AG04449 (cell line): ENCODE measurements at regions of chr2 and their contacts with region 1.

Region 1: DNA sequence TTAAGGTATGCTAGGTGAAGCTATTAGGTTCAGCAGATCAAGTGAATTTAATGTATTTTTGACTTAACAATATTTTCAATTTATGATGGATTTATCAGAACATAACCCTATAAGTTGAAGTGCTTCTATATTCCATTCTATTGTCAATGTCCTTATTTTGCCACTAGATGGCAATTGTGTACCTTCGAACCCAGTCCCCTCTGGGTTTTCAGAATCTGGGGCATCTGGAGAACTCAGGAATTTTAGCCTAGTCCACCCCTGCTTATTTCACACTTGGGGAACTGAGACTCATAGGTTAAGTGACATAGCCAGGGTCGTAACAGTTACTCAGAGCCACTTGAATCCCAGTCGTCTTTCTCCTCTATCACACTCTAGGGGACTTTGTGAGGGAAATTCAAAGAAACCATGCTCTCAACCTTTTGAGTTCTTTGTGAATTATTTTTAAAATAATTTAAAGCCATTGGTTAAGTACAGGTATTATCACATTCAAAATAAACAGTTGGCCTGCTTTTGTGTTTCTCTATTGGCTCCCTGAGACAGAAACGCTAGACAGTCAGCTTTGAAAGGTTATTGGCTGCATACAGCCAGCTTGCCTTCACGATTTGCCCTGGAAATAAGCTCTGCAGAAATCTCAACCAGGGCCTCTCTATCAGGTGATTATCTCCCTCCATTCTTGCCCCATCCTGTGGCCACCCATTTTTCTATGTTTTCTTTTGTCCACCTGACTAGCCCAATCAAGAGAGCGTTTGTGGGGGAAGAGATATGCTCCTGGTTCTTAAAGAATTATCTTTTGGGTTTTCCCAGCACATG is 145.0 kb downstream of the TTC27 start:
- DNase-seq: peak; percentile 21
- H3K4me3 ChIP-seq: no peak overlapping the region
- CTCF ChIP-seq: peak; percentile 44

Region 2: DNA sequence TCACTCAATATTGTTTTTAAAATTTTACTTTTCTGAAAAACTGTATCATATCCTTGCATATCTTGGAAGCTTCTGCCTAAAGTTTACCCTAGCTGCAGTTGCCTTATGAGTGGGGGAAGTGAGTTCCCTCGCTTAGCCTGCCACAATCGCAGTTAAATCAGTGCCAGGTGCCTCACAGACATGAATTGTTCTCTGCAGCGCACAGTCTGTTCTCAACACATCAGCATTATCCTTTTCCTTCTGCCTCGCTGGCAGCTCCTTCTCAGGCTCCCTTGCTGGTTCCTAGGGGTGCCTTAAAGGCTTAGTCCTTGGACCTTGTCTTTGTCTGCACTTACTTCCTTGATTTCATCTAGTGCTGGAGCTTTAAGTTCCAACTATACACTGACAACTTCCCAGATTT is 12.2 kb before region 1 on chr2:
- CTCF ChIA-PET with region 1: interaction called, 29 read pairs
- POLR2A ChIA-PET with region 1: no interaction called
- DNase-seq: no peak
- H3K4me3 ChIP-seq: no peak overlapping the region
- CTCF ChIP-seq: no peak

Region 3: DNA sequence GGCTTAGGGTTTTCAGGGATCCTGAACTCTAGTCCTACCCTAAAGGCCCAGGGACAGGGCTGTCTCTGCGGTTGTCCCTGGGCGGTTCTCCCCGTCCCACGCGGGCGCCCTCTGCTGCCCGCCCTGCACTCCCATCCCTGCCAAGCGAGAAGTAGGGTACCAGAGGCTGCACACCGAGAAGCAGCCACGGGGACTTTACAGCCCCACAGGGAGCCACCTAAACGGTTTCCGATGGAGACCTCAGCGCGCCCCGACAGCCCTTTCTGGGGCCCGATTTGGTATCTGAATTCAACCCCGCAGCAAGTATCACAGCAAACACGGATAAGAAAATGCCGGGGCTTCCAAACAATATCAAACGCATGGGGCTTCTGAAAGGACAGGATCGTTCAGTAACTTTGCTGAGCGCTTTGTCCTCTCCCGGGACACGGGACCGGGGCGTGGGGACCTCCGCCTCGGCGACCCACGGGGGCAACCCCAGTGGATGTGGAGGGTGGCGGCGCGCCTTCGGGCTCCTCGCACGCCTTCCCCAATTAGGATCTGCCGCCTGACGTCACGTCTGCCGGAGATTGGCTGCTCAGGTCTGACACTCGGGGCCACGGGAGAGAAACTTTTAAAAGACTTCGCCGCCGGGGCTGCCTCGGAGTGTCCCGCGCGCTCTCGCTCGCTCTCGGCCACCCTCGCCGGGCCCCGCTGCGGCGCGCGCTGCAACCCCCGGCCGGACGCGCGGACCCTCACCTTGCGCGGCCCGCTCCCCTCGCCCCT is 173.7 kb after region 1 on chr2 and contains the start of gene LTBP1:
- CTCF ChIA-PET with region 1: interaction called, 33 read pairs
- POLR2A ChIA-PET with region 1: no interaction called
- DNase-seq: no peak
- H3K4me3 ChIP-seq: peak within 1 kb of the TSS; percentile 74
- CTCF ChIP-seq: peak; percentile 96

Region 4: DNA sequence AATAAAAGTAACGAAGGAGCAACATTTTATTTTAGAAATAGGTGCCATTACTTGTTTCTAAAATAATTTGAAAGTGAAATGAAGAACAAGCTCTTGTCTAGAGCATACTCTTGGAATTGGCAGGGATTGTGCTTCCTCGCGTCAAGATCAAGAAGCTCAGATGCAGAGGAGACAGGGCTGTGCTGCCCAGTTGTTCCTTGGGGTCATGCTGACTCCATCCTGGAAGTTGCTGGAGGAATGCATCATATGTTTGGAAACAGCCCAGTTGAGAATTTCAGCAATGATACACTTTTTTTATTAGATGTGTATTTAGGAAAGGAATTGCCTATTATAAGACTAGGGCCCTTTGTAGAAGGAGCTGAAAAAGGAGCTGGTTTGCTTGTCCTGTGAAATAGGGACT is 191.1 kb after region 1 on chr2:
- CTCF ChIA-PET with region 1: no interaction called
- POLR2A ChIA-PET with region 1: no interaction called
- DNase-seq: no peak
- H3K4me3 ChIP-seq: no peak overlapping the region
- CTCF ChIP-seq: no peak

Region 5: DNA sequence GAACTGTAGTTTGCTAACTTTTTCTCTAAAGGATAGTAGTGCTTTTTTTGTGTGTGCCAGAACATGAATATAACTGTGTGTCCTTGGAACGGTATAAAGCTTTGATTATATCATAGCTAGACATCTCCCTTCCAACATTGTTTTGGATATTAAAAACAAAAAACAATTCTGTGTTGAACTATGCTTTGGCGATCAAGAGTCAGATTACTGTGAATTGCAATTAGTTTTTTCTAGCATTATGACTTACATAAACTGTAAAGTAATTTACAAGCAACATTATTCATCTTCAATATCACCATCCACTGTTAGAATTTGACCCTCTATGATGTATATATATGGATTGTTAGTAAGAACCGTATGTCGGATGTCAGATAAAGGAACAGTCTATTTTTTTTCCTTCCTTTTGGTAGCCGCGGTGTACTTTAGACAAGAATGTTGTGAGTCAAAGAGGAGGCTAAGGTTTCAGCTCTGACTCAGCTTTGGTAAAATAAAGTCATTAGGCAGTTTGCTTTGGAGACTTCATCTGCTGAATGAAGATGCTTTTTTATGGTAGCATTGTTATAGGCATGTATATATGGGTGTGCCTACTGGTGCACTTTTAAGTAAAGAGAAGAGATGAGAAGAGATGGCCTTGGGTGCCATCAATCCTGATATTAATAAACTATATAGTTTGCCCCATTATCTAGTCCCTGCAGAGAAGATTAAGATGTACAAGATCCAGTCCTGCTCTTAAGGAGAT is 250.3 kb after region 1 on chr2:
- CTCF ChIA-PET with region 1: interaction called, 45 read pairs
- POLR2A ChIA-PET with region 1: no interaction called
- DNase-seq: peak; percentile 46
- H3K4me3 ChIP-seq: no peak overlapping the region
- CTCF ChIP-seq: no peak